ENCODE measurements at regions of chr2 and their contacts with region 1.

Region 1: DNA sequence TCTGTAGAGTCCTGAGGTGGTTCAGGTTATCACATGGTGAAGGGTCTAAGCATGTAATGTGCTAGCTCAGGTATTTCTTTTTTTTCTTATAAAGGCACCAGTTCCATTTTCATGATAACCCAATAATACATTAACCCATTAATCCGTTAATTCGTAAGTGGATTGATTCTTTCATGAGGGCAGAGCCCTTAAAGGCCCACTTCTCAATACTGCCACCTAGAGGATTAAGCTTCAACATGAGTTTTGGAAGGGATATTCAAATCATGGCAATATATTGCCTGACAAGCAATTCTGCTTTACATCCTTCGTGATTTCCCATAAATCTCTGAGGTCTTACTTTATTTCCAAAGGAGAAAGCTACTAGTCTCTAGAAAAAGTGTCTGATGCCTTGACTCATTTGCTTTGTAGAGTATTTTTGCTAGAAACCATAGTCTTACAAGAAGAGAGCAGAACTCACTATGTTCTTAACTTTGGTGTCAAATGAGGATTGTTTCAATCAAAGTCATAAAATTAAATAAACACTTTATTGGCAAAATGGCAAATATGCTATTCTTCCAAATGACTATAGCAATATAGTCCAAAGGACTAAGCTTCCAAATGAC is 271.3 kb downstream of the KCNS3 start:
- DNase-seq: peak; percentile 67
- H3K4me3 ChIP-seq: no peak overlapping the region
- H3K27ac ChIP-seq: no peak overlapping the region
- H3K4me1 ChIP-seq: no peaks in the 10 kb centered on the region
- H3K27me3 ChIP-seq: no peaks in the 10 kb centered on the region

Region 2: DNA sequence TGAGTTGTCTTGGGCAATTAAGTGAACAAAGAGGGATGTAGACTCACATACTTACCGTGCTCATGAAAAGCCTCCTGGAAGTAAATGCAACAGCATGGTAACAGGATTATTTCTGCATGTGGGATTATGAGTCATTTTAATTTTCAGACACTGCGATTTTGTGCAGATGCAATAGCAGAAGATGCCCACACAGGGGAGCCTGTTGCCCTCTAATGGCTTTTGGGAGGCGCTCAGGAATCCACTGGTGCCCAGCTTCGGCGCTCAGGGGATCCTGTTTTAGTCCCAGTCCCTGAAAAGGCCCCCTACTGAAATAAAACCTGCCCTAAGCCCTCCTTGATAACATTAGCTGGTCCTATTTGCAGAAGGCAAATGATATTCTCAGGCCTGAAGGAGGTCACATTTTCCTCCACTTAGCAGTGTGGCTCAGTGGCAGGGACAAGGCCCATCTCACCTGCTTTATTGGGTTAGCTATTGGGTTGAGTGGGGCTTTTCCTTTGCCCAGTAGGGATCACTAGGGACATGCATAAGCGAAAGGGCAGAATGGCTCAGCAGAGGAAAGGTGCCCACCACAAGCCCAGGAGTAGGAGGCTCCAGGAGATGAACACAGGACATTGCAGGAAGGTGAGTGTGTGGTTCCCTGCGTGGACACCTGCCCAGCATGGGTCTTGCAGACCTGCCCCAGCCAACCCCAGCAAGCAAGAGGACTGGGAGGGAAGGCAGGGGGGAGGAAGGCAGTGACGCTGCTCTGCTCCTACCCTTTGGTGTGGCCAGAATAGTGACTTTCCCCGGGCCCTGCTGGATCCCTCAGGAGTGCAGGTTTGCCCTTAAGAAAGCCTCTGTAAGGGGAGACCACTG is 297.8 kb before region 1 on chr2:
- in situ Hi-C with region 1: loop called (anchors 10 kb)
- DNase-seq: peak; percentile 87
- H3K4me3 ChIP-seq: no peak overlapping the region
- H3K27ac ChIP-seq: no peak overlapping the region
- H3K4me1 ChIP-seq: no peaks in the 10 kb centered on the region
- H3K27me3 ChIP-seq: peaks cover 10% of the 10 kb centered on the region; the same call in 1 of the 2 replicates

Region 3: DNA sequence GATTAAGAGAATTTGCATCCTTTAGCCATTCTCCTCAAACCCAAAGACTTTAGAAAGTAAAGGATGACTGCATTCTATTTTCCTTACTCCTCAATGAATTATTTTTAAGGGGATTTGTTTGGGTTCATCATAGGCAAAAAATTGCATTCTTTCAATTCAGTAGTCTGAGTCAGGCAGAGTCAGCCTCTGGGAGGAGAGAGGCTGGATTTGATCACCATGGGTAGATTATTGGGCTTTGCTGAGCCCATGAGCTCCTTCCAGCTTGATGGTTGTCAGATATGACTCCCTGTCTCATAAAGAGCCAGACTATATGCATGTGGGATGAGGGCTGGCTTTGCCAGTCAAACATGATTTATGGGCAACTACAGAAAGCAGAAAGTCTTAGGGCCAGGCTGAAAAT is 170.0 kb before region 1 on chr2:
- in situ Hi-C with region 1: no loop called
- DNase-seq: peak; percentile 89
- H3K4me3 ChIP-seq: no peak overlapping the region
- H3K27ac ChIP-seq: peak overlapping the region; percentile 60
- H3K4me1 ChIP-seq: peaks cover 44% of the 10 kb centered on the region
- H3K27me3 ChIP-seq: no peaks in the 10 kb centered on the region

Measured in GM23248 (cell line).